HCT116 (cell line): ENCODE measurements at regions of chr3 and their contacts with region 1.

Region 1: DNA sequence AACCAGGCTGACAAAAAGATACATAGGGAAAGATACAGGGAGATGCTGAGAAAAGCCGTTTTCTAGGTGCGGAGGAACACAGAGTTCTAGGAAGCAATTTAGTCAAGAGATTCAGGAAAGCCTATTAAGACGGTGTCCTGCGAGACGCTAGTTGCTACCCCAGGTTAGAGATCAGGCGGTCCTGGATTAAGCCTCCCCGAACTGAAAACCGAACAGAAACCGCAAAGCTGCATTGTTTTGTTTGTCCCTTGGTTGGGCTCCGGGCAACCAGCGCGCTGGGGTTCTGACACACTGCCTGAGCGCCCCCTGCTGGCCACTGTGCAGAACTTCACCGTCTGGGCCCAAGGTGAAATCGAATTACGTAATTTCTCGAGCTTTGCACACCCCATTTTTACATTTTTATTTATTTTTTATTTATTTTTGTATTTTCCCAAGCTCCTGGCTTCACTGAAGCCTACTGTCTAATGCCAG is 37.3 kb upstream of the NDUFB4 start:
- DNase-seq: peak; percentile 76
- ATAC-seq: peak; percentile 62
- H3K4me3 ChIP-seq: peak overlapping the region; percentile 52 to 65
- H3K27ac ChIP-seq: peak overlapping the region; percentile 24; the same call in 1 of the 2 replicates
- H3K4me1 ChIP-seq: peaks cover 15 to 35% of the 10 kb centered on the region in 2 experiments
- H3K27me3 ChIP-seq: no peaks in the 10 kb centered on the region
- CTCF ChIP-seq: peak; percentile 83 to 95 (median 92)
- POLR2A ChIP-seq: no peak
- RAD21 ChIP-seq: peak; percentile 96

Region 2: DNA sequence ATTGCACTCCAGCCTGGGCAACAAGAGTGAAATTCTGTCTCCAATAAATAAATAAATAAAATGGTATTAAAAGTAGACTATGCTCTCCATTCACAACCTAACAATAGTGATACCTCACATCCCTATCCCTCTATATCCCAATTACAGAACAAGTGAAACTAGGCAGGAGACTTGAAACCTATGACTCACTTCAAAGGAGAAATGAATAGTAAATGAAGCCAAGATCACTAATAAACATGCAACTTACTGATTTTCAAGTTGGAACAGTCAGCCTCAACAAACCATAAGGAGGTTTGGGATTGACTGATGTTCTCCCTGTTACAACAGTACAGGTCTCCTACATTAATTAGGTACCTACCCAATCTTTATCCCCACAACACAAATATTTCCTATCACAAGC is 567.9 kb before region 1 on chr3:
- CTCF ChIA-PET with region 1: no interaction called
- POLR2A ChIA-PET with region 1: no interaction called
- RAD21 ChIA-PET with region 1: no interaction called
- intact Hi-C with region 1: no loop called
- DNase-seq: no peak
- ATAC-seq: no peak
- H3K4me3 ChIP-seq: no peak overlapping the region
- H3K27ac ChIP-seq: no peak overlapping the region
- H3K4me1 ChIP-seq: no peaks in the 10 kb centered on the region
- H3K27me3 ChIP-seq: no peaks in the 10 kb centered on the region
- CTCF ChIP-seq: no peak
- POLR2A ChIP-seq: no peak
- RAD21 ChIP-seq: no peak

Region 3: GRCh38 chr3:120258009-120258408 is 300.8 kb before region 1 on chr3:
- CTCF ChIA-PET with region 1: no interaction called
- POLR2A ChIA-PET with region 1: no interaction called
- RAD21 ChIA-PET with region 1: no interaction called
- intact Hi-C with region 1: no loop called
- DNase-seq: no peak
- ATAC-seq: no peak
- H3K4me3 ChIP-seq: no peak overlapping the region
- H3K27ac ChIP-seq: no peak overlapping the region
- H3K4me1 ChIP-seq: no peaks in the 10 kb centered on the region
- H3K27me3 ChIP-seq: no peaks in the 10 kb centered on the region
- CTCF ChIP-seq: no peak
- POLR2A ChIP-seq: no peak
- RAD21 ChIP-seq: no peak

Region 4: DNA sequence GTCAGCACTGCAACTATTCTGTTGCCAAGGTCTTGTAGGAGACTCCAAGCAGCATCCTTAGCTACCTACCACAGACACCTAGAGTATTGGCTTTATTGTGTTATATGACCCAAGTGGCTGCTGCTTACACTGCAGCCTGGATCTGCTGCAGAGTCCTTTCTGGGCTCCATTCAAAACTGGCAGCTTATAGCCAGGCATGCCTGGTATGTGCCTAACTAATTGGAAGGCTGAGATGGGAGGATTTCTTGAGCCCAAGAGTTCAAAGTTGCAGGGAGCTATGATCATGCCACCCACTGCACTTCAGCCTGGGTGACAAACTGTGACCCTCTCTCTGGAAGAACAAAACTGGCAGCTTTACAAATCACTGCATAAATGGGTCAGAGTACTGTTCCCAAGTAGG is 46.0 kb after region 1 on chr3:
- CTCF ChIA-PET with region 1: no interaction called
- POLR2A ChIA-PET with region 1: no interaction called
- RAD21 ChIA-PET with region 1: no interaction called
- intact Hi-C with region 1: no loop called
- DNase-seq: no peak
- ATAC-seq: peak; percentile 53; the same call in 1 of the 2 replicates
- H3K4me3 ChIP-seq: no peak overlapping the region
- H3K27ac ChIP-seq: no peak overlapping the region
- H3K4me1 ChIP-seq: no peaks in the 10 kb centered on the region
- H3K27me3 ChIP-seq: no peaks in the 10 kb centered on the region
- CTCF ChIP-seq: no peak
- POLR2A ChIP-seq: no peak
- RAD21 ChIP-seq: no peak

Region 5: GRCh38 chr3:121152573-121152972 is 593.8 kb after region 1 on chr3:
- CTCF ChIA-PET with region 1: no interaction called
- POLR2A ChIA-PET with region 1: no interaction called
- RAD21 ChIA-PET with region 1: no interaction called
- intact Hi-C with region 1: loop called (anchors 1 kb)
- DNase-seq: peak; percentile 33
- ATAC-seq: peak; percentile 84
- H3K4me3 ChIP-seq: no peak overlapping the region
- H3K27ac ChIP-seq: no peak overlapping the region
- H3K4me1 ChIP-seq: peaks cover 0 to 9% of the 10 kb centered on the region in 2 experiments; a peak in 2 of 4 replicates
- H3K27me3 ChIP-seq: no peaks in the 10 kb centered on the region
- CTCF ChIP-seq: peak; percentile 19 to 59 (median 45); a peak in 5 of 6 replicates
- POLR2A ChIP-seq: no peak
- RAD21 ChIP-seq: peak; percentile 57

Region 6: GRCh38 chr3:121529308-121529707 is 970.5 kb after region 1 on chr3:
- CTCF ChIA-PET with region 1: no interaction called
- POLR2A ChIA-PET with region 1: no interaction called
- RAD21 ChIA-PET with region 1: interaction called in 1 of 2 experiments, 3 read pairs
- intact Hi-C with region 1: loop called (anchors 1 kb)
- DNase-seq: no peak
- ATAC-seq: no peak
- H3K4me3 ChIP-seq: no peak overlapping the region
- H3K27ac ChIP-seq: no peak overlapping the region
- H3K4me1 ChIP-seq: no peaks in the 10 kb centered on the region
- H3K27me3 ChIP-seq: no peaks in the 10 kb centered on the region
- CTCF ChIP-seq: peak; percentile 26 to 54 (median 47); a peak in 5 of 6 replicates
- POLR2A ChIP-seq: no peak
- RAD21 ChIP-seq: peak; percentile 40